Lower leg skin (tissue), 4 donors: ENCODE measurements at regions of chr6 and their contacts with region 1.

Region 1: DNA sequence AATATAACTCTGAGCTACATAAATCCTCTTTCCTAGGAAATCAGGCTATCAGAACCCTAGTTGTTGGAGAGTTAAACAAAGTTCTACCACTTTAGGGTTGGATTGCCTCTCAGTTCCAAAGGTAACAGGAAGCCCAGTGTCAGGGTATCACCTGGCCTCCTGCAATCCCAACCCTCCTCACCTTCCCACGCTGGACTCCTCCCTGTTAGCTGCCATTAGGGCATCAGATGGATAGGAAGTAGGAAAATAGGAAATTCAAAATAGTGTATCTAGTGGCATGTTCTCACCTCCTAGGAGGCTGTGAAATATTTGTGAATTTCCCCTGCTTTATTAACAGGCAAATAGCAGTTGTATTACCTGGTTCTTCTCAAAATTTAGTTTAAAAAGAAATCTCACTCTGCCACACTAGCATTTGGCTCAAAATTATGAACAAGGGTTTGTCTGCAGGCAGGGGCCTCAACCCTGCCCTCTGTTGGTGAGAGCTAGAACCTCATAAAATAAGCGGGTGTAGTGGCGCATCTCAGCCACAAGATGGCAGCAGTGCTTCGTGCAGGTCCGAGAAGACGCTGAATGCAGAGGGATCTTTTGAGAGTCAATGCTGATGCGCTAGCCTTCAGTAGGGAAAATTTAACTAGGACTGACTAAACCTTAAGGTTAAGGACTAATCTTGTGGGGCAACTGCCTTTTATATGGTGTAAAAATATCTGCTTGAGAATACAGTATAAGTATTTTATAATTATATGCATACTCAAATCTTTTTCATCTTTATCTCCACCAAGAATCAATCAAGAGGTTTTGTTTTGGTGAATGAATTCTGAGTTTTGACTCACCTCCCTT is 209.8 kb upstream of the KCNQ5 start:
- DNase-seq: peak; percentile 73 to 94
- H3K4me3 ChIP-seq: no peak overlapping the region
- CTCF ChIP-seq: peak in 1 of 3 donors; percentile 98
- POLR2A ChIP-seq: no peak

Region 2: DNA sequence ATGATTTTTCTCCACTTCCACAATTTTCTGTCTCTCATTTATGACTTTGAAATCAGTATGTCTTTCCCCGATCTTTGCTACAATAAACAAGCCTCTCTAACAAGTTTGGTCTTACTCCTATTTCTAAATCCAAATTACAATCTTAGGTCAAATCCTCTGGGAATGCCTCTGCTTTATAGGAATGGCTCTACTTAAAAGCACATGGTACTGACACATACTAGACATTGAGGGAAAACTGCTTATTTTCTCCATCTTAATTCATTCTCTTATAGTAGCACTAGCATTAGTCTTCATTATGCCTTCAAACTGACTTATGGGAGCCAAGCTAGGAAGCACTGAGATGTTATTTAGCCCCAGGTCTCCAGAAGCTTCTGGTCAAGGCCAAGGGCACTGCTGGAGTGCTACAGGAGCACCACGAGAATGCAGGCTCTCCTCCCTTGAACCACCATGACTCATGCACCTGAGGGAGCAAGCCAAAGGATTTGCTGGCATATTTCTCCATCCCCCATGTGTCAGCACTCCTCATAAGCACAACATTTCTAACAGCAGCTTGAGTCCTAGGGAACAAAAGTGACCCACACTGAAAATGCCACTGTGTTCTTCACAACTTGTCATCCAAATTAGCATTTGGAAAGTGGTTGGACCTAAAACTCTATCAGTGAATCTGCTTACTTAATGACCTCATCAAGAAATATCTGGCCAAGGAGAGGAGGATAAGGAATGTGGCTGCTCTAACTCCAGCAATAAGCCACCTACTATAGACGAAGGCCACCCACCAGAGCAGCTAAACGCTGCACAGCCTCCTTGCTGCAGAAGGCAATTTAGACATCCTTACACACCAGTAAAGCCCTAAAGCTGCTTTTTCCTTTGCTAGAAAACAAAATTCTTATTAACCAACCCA is 53.0 kb after region 1 on chr6:
- intact Hi-C with region 1: no loop called
- DNase-seq: no peak
- H3K4me3 ChIP-seq: no peak overlapping the region
- CTCF ChIP-seq: no peak
- POLR2A ChIP-seq: no peak

Region 3: GRCh38 chr6:73129653-73130443 is 717.8 kb after region 1 on chr6:
- intact Hi-C with region 1: loop called (anchors 5 kb)
- DNase-seq: peak; percentile 68 to 94
- H3K4me3 ChIP-seq: no peak overlapping the region
- CTCF ChIP-seq: peak in 1 of 3 donors; percentile 50
- POLR2A ChIP-seq: no peak

Region 4: GRCh38 chr6:73180763-73181619 is 768.9 kb after region 1 on chr6:
- intact Hi-C with region 1: loop called (anchors 5 kb)
- DNase-seq: no peak
- H3K4me3 ChIP-seq: no peak overlapping the region
- CTCF ChIP-seq: peak in 1 of 3 donors; percentile 33
- POLR2A ChIP-seq: no peak